ENCODE measurements at regions of chr6 and their contacts with region 1.

Region 1: DNA sequence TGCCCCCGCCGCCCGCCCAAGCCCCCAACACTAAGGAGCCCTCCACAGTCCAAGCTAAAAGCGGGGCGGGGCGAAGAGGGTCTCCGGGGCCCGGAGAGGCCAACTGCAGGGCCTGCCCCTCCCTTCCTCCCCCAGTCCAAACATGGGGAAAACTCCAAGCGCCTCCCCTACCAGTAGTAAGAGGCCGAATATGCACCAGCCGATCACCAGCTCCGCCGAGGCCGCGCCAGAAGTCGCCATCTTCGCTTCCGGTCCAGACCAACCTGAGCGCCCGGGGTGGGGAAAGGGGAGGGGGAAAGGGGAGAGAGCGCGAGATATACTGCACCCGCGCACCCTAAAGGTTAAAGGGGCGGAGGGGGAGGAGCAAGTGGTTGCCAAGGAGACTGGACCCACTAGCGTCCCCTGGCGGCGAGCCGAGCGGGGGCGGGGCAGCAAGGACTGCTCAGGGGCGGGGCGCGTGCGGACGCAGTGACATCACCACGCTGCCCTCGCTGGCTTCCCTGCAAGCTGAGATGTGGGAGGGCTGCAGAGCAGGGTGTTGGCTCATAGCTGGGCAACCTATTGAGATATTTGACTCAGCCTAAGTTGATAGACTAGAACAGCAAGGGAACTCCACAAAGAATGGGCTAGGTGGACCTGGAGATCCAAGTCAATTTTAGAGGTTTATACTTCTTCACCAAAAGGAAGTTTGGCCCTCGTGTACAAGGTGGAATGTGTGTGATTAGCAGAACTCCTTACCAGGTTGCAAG is at the start of gene LMBRD1:
- DNase-seq: peak; percentile 93 to 99
- H3K4me3 ChIP-seq: peak within 1 kb of the TSS; percentile 64 to 68
- H3K27ac ChIP-seq: peak within 1 kb of the TSS; percentile 90 to 91
- H3K4me1 ChIP-seq: peaks cover 0 to 8% of the 10 kb centered on the region in 2 donors
- H3K27me3 ChIP-seq: no peaks in the 10 kb centered on the region
- CTCF ChIP-seq: peak; percentile 67 to 70 (median 67)
- total RNA-seq, gene LMBRD1: 31.1 TPM

Region 2: GRCh38 chr6:68634726-68635411 is 1161.9 kb before region 1 on chr6 and contains the start of gene ADGRB3:
- intact Hi-C with region 1: loop called (anchors 10 kb)
- DNase-seq: peak; percentile 37 to 92
- H3K4me3 ChIP-seq: peak within 1 kb of the TSS; percentile 82 to 94
- H3K27ac ChIP-seq: peak within 1 kb of the TSS; percentile 82 to 87
- H3K4me1 ChIP-seq: no peaks in the 10 kb centered on the region
- H3K27me3 ChIP-seq: no peaks in the 10 kb centered on the region
- CTCF ChIP-seq: peak in 2 of 3 experiments; percentile 24 to 42
- total RNA-seq, gene ADGRB3: 4.4 TPM

Region 3: GRCh38 chr6:69601132-69601531 is 195.7 kb before region 1 on chr6:
- intact Hi-C with region 1: no loop called
- DNase-seq: no peak
- H3K4me3 ChIP-seq: no peak overlapping the region
- H3K27ac ChIP-seq: no peak overlapping the region
- H3K4me1 ChIP-seq: no peaks in the 10 kb centered on the region
- H3K27me3 ChIP-seq: no peaks in the 10 kb centered on the region
- CTCF ChIP-seq: no peak

Region 4: DNA sequence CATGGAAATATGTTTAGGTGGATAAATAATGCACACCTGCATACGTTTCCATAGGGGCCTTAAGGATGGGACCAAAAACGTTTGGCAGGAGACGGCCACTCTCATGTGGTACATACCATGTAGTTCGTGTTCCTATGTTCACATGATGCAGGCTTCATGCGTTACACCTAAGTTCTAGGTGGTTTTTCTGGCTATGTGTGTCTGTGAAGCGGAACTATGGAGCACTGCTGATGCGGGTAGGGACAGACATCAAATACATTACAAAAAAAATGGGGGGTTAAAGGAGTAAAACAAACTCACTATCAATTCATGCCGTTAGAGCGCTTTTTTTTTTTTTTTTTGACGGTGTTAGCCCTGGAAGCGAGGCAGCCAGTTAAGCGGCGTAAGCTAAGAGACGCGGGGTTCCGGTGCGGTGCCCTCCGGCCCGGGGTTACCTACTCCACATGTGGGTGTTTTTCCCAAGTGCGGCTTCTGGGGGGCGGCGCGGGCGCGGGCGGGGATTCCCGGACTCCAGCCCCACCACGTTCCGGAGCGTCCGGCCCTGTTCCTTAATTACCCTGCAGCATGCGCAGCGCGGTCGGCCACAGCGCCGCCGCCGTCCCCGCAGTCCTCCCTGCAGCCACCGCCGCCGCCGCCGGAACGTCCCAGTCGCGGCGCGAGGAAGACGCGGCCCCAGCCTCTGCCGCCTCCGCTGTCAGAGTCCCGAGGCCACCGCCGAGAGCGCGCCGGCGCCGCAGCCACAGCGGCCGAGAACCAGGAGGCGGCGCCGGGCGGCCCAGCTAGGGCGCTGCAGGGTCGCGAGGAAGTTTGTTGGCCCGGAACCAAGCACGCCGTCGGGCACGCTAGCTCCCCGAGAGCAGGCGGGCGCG is 70.2 kb after region 1 on chr6:
- intact Hi-C with region 1: loop called (anchors 5 kb)
- DNase-seq: peak in 1 of 2 donors; percentile 74
- H3K4me3 ChIP-seq: peak overlapping the region; percentile 77 to 86
- H3K27ac ChIP-seq: peak overlapping the region in 1 of 2 donors; percentile 27
- H3K4me1 ChIP-seq: peaks cover 0 to 5% of the 10 kb centered on the region in 2 donors
- H3K27me3 ChIP-seq: no peaks in the 10 kb centered on the region
- CTCF ChIP-seq: no peak

Region 5: GRCh38 chr6:69936674-69937363 is 140.0 kb after region 1 on chr6:
- intact Hi-C with region 1: loop called (anchors 5 kb)
- DNase-seq: peak in 1 of 2 donors; percentile 65
- H3K4me3 ChIP-seq: no peak overlapping the region
- H3K27ac ChIP-seq: peak overlapping the region; percentile 41 to 42
- H3K4me1 ChIP-seq: no peaks in the 10 kb centered on the region
- H3K27me3 ChIP-seq: no peaks in the 10 kb centered on the region
- CTCF ChIP-seq: no peak

Region 6: DNA sequence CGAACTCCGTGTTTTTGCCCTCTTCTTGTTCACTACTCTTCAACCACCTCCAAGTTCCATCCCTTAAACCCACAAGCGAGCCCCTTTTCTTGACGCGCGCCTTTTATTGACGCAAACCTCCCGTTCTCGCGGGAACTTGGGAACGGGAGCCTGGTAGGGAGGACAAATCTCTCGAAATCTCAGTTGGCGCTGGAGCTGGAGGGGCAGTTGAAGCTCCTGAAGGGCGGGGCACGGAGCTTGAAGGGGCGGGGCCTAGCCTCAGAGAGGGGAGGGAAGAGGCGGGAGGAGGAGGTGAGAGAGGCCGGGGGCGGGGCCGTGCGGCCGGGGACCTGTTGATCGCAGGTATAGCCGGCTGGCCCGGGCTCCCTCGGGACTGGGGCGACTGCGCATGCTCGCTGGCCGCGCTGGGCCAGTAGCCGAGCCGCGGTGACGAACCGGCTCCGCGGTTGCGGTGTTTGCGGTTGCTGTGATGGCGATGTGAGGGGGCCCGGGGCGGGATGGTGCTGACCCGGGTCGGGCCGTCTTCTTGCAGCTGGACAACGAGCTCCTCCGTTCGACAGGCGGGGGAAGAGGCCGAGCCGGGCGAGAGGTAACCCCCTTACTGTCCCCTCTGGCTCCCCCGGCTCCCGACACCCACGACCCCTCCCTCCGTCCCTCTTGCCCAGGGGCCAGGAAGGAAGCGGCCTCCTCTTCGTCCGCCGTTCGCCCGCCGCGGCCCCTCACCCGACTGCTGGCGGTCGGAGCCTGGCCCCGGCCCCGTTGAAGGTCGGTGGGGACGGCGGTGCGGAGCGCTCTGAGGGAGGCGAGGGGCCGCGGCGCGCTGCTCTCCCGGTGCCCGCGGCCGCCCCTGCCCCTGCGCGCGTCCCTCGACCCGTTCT is 616.5 kb after region 1 on chr6 and contains the start of gene FAM135A:
- intact Hi-C with region 1: loop called (anchors 10 kb)
- DNase-seq: peak; percentile 92 to 99
- H3K4me3 ChIP-seq: peak within 1 kb of the TSS; percentile 67 to 95
- H3K27ac ChIP-seq: peak within 1 kb of the TSS; percentile 89 to 94
- H3K4me1 ChIP-seq: peaks cover 0 to 5% of the 10 kb centered on the region in 2 donors
- H3K27me3 ChIP-seq: no peaks in the 10 kb centered on the region
- CTCF ChIP-seq: no peak
- total RNA-seq, gene FAM135A: 10.7 TPM